ENCODE measurements at regions of chr2 and their contacts with region 1.

Region 1: GRCh38 chr2:6896930-6897759 is 19.6 kb downstream of the RSAD2 start:
- DNase-seq: no peak
- ATAC-seq: peak; percentile 69
- H3K4me3 Mint-ChIP-seq: no peak overlapping the region
- H3K27ac Mint-ChIP-seq: peak overlapping the region; percentile 14
- H3K4me1 Mint-ChIP-seq: peaks cover 9% of the 10 kb centered on the region
- H3K27me3 Mint-ChIP-seq: no peaks in the 10 kb centered on the region

Region 2: GRCh38 chr2:5826979-5827655 is 1070.0 kb before region 1 on chr2:
- CTCF ChIA-PET with region 1: no interaction called
- POLR2A ChIA-PET with region 1: no interaction called
- intact Hi-C with region 1: no loop called
- DNase-seq: no peak
- ATAC-seq: no peak
- H3K4me3 Mint-ChIP-seq: no peak overlapping the region
- H3K27ac Mint-ChIP-seq: no peak overlapping the region
- H3K4me1 Mint-ChIP-seq: no peaks in the 10 kb centered on the region
- H3K27me3 Mint-ChIP-seq: no peaks in the 10 kb centered on the region

Region 3: DNA sequence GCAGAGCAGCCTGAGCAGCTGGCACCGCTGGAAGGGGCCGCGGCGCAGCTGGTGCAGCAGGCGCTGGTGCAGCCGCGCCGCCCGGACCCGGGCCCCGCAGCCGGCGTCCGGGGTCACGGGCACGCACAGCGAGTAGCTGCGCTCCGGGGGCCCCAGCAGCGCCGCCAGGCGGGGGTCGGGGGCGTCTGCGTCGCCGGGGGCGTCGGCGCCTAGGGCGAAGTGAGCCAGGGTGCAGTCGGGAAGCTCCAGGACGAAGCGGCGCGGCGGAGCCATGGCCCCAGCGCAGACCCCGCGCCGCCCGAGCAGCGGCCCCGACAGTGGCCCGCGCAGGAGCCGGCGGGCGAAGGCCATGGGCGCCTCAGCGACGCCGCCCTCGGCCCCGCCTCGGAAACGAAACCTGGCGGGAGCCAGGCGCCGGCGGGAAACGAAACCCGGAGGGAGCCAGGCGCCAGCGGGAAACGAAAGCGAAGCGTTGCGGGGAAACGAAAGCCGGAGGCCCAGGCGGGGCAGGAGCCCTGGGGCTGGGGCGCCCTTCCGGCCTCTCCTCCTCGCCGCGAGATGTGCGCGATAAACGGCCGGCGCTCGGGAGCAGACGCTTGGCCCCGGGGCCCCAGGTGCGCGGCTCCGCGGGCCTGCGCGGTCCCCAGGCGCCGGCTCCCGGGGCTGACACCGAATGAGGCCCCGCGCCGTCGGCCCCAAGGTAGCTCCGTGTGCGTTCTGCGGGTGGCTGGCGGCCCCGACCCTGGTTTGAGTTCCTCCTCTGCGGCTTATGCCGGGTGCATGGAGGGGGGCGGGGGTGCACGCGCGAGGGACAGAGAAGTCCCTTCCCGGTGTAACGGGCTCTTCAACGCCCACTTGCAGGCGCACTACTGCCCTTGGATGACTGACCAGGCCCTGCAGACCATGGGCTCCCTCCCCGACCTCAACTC is 31.5 kb before region 1 on chr2 and contains the start of gene CMPK2:
- CTCF ChIA-PET with region 1: interaction called, 16 read pairs
- POLR2A ChIA-PET with region 1: no interaction called
- intact Hi-C with region 1: no loop called
- DNase-seq: peak; percentile 89
- ATAC-seq: peak; percentile 77
- H3K4me3 Mint-ChIP-seq: peak within 1 kb of the TSS; percentile 93
- H3K27ac Mint-ChIP-seq: peak within 1 kb of the TSS; percentile 98
- H3K4me1 Mint-ChIP-seq: peaks cover 12% of the 10 kb centered on the region
- H3K27me3 Mint-ChIP-seq: peaks cover 7% of the 10 kb centered on the region
- total RNA-seq, gene CMPK2: 6.2 to 8.7 TPM

Region 4: DNA sequence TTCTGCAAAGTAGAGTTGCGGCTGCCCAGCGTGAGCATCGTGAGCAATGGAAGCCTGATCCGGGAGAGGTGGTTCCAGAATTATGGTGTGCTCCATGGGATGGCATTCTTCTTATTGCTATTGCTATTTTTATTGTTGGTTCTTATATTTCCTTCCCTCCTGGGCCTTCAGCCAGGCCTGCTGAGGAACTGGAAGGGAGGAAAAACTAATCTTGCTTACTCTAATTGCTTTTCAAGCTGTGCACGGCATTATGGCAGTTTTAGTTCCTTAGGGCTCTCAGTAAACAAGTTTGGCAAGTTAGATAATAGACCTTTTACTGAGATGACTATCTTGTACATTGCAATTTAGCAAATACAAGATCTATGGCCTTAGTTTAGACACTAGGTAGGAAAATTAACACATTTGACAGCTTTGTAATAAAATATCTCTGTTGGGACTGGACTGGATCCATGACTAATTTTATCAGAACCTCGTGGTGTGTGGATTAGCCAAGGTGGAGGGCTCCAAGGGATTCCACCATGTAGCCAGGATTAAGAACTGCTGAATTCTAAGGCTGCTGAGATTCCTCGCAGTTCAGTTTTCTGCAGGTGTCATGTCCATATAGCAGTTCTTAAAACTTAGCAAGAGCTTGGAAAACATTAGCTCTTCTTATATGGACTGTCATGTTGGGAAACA is 13.6 kb before region 1 on chr2:
- CTCF ChIA-PET with region 1: interaction called, 19 read pairs
- POLR2A ChIA-PET with region 1: no interaction called
- intact Hi-C with region 1: no loop called
- DNase-seq: no peak
- ATAC-seq: no peak
- H3K4me3 Mint-ChIP-seq: no peak overlapping the region
- H3K27ac Mint-ChIP-seq: no peak overlapping the region
- H3K4me1 Mint-ChIP-seq: peaks cover 29% of the 10 kb centered on the region
- H3K27me3 Mint-ChIP-seq: no peaks in the 10 kb centered on the region

Region 5: GRCh38 chr2:6917071-6917760 is 20.1 kb after region 1 on chr2 and contains the start of gene RNF144A:
- CTCF ChIA-PET with region 1: interaction called, 47 read pairs
- POLR2A ChIA-PET with region 1: interaction called, 4 read pairs
- intact Hi-C with region 1: loop called (anchors 1 kb)
- DNase-seq: peak; percentile 84
- ATAC-seq: peak; percentile 54
- H3K4me3 Mint-ChIP-seq: peak within 1 kb of the TSS; percentile 72
- H3K27ac Mint-ChIP-seq: peak within 1 kb of the TSS; percentile 82
- H3K4me1 Mint-ChIP-seq: peaks cover 79% of the 10 kb centered on the region
- H3K27me3 Mint-ChIP-seq: no peaks in the 10 kb centered on the region
- total RNA-seq, gene RNF144A: 38.6 to 42.7 TPM

Region 6: DNA sequence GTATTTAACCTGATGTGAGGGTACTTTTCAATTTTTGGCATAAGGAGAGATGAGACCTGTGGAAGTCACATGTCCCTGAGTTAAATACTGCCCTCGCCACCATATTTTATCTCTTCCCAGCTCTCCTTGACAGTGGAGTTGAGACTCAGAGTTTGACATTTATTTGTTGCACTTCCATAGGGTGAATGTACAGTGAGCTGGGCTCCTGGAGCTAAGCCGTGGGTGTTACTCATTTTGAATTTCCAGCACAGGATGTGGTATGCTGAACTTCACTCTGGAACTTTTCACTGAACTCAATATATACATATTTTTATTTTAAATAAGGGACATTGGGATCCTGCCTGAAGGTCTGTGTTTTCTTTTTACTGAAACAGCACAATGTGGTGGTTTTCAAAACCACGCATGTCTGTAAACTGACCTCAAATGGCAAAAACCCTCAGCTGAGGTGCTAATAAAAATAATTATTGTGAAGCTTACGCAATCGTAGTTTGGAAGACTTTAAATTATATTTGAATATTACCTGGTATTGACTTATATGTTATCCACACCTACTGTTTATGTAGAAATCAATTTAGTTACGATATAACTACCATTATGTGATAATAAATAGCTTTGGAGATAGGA is 32.2 kb after region 1 on chr2:
- CTCF ChIA-PET with region 1: interaction called, 12 read pairs
- POLR2A ChIA-PET with region 1: interaction called, 3 read pairs
- intact Hi-C with region 1: no loop called
- DNase-seq: no peak
- ATAC-seq: peak; percentile 50
- H3K4me3 Mint-ChIP-seq: no peak overlapping the region
- H3K27ac Mint-ChIP-seq: peak overlapping the region; percentile 8
- H3K4me1 Mint-ChIP-seq: peaks cover 67% of the 10 kb centered on the region
- H3K27me3 Mint-ChIP-seq: no peaks in the 10 kb centered on the region

Region 7: GRCh38 chr2:7014174-7014640 is 117.1 kb after region 1 on chr2:
- CTCF ChIA-PET with region 1: interaction called, 17 read pairs
- POLR2A ChIA-PET with region 1: no interaction called
- intact Hi-C with region 1: loop called in 1 of 2 experiments (anchors 1 kb)
- DNase-seq: peak; percentile 43
- ATAC-seq: peak; percentile 39
- H3K4me3 Mint-ChIP-seq: no peak overlapping the region
- H3K27ac Mint-ChIP-seq: peak overlapping the region; percentile 27
- H3K4me1 Mint-ChIP-seq: peaks cover 40% of the 10 kb centered on the region
- H3K27me3 Mint-ChIP-seq: no peaks in the 10 kb centered on the region

Region 8: GRCh38 chr2:7083577-7084509 is 186.7 kb after region 1 on chr2:
- CTCF ChIA-PET with region 1: interaction called, 3 read pairs
- POLR2A ChIA-PET with region 1: no interaction called
- intact Hi-C with region 1: loop called (anchors 1 to 2 kb)
- DNase-seq: peak; percentile 42
- ATAC-seq: peak; percentile 60
- H3K4me3 Mint-ChIP-seq: no peak overlapping the region
- H3K27ac Mint-ChIP-seq: no peak overlapping the region
- H3K4me1 Mint-ChIP-seq: no peaks in the 10 kb centered on the region
- H3K27me3 Mint-ChIP-seq: no peaks in the 10 kb centered on the region